ENCODE measurements at regions of chr17 and their contacts with region 1.

Region 1: DNA sequence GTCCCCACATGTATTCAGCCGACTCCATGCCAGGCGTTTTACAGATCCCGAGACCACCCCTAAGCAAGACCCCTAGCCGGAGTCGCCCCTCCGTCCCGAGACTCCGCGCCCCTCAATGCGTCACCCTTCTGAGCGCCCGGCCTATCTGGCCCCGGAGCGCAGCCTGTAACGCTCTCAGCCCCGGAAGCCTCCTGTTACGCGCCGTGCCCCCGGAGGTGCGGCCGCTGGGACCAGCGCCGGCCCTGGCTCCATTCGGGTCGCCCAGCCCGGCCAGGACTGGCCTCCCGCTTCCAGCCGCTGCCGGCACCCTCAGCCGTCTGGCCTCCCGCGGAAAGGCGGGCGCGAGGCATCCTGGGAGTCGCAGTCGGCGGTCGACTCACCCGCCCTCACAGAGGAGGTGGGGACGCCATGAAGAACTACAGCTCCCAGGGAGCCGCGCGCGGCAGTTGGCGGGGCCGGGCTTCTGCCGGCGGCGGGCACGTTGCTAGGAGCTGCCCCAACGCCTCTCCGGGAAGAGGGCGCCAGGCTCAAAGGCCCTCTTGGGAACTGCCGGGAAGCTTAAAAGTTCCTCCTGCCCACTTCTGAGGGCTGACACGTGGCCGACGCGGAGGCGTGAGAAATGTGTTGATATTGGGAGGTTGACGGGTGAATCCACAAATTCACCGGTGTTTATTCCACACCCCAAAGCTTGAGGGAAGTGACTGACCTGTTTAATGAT is at the start of gene FBF1:
- DNase-seq: peak; percentile 97
- ATAC-seq: peak; percentile 98
- H3K4me3 Mint-ChIP-seq: peak within 1 kb of the TSS; percentile 90
- H3K27ac Mint-ChIP-seq: peak within 1 kb of the TSS; percentile 97
- H3K4me1 Mint-ChIP-seq: peaks cover 16% of the 10 kb centered on the region
- H3K27me3 Mint-ChIP-seq: no peaks in the 10 kb centered on the region
- CTCF ChIP-seq: no peak
- total RNA-seq, gene FBF1: 19.8 to 23.7 TPM (median 21.0 TPM) in 3 replicates

Region 2: DNA sequence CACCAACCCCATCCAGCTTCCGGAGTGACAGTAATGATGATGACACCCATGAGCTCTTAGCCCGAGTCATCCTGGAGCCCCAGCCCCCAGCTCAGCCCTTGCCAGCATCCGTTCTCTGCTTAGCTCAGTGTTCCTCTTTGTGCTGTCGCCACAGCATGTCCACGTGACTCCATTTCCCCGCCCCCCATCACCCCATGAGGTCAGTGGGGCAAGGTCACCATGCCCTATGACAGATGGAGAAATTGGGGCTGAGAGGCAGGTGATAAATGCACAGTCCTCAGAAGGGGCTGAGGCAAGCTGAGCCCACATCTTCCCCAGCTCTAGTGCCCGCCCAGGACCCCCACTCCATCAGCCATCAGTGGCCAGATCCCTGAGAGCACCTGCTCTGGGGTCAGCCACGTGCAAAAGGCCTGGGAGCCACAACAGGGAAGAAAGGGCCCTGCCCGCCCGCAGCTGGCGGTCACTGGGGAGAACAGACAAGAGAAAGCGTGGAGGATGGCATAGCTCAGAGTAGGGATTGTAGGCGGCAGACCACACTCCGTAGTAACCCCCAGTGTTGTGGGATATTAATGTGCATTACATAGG is 202.6 kb before region 1 on chr17:
- CTCF ChIA-PET with region 1: no interaction called
- POLR2A ChIA-PET with region 1: no interaction called
- DNase-seq: no peak
- ATAC-seq: no peak
- H3K4me3 Mint-ChIP-seq: no peak overlapping the region
- H3K27ac Mint-ChIP-seq: peak overlapping the region; percentile 60
- H3K4me1 Mint-ChIP-seq: no peaks in the 10 kb centered on the region
- H3K27me3 Mint-ChIP-seq: no peaks in the 10 kb centered on the region
- CTCF ChIP-seq: no peak

Region 3: DNA sequence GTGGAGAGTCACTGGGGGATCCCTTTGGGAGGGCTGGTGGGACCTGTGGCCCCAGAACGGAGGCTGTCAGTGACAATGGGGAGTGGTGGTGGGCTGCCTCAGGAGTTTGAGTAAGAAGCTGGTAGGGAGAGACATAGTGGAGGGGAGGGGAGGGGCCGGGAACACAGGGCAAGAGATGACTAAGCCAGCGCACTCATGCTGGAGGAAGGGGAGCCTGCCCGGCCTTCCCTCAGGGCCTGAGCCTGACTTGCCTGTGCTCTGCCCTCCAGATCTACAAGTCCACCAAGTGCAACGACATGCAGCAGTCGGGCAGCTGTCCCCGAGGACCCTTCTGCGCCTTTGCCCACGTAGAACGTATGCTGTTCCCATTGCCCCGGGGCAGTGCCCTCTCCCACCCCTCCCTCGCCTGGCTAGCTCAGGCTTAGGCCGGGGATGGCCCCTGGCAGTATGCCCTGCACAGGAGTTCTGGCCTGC is 125.9 kb before region 1 on chr17:
- CTCF ChIA-PET with region 1: no interaction called
- POLR2A ChIA-PET with region 1: no interaction called
- DNase-seq: no peak
- ATAC-seq: no peak
- H3K4me3 Mint-ChIP-seq: no peak overlapping the region
- H3K27ac Mint-ChIP-seq: no peak overlapping the region
- H3K4me1 Mint-ChIP-seq: no peaks in the 10 kb centered on the region
- H3K27me3 Mint-ChIP-seq: no peaks in the 10 kb centered on the region
- CTCF ChIP-seq: no peak

Region 4: GRCh38 chr17:75904749-75905521 is 35.9 kb before region 1 on chr17 and contains the start of gene MRPL38:
- CTCF ChIA-PET with region 1: interaction called, 15 read pairs
- POLR2A ChIA-PET with region 1: interaction called, 5 read pairs
- DNase-seq: peak; percentile 96
- ATAC-seq: peak; percentile 98
- H3K4me3 Mint-ChIP-seq: peak within 1 kb of the TSS; percentile 98
- H3K27ac Mint-ChIP-seq: peak within 1 kb of the TSS; percentile 95
- H3K4me1 Mint-ChIP-seq: peaks cover 3% of the 10 kb centered on the region; the same call in 1 of the 2 replicates
- H3K27me3 Mint-ChIP-seq: no peaks in the 10 kb centered on the region
- CTCF ChIP-seq: peak; percentile 97
- total RNA-seq, gene MRPL38: 107 to 146 TPM (median 116 TPM) in 3 replicates

Region 5: GRCh38 chr17:75927286-75927922 is 13.5 kb before region 1 on chr17:
- CTCF ChIA-PET with region 1: interaction called, 15 read pairs
- POLR2A ChIA-PET with region 1: no interaction called
- DNase-seq: peak; percentile 63
- ATAC-seq: peak; percentile 91
- H3K4me3 Mint-ChIP-seq: no peak overlapping the region
- H3K27ac Mint-ChIP-seq: no peak overlapping the region
- H3K4me1 Mint-ChIP-seq: no peaks in the 10 kb centered on the region
- H3K27me3 Mint-ChIP-seq: no peaks in the 10 kb centered on the region
- CTCF ChIP-seq: peak; percentile 47; the same call in 1 of the 2 replicates

Measured in WTC11 (cell line).